CD4-positive, alpha-beta memory T cell (primary cell): ENCODE measurements at regions of chr4 and their contacts with region 1.

Region 1: DNA sequence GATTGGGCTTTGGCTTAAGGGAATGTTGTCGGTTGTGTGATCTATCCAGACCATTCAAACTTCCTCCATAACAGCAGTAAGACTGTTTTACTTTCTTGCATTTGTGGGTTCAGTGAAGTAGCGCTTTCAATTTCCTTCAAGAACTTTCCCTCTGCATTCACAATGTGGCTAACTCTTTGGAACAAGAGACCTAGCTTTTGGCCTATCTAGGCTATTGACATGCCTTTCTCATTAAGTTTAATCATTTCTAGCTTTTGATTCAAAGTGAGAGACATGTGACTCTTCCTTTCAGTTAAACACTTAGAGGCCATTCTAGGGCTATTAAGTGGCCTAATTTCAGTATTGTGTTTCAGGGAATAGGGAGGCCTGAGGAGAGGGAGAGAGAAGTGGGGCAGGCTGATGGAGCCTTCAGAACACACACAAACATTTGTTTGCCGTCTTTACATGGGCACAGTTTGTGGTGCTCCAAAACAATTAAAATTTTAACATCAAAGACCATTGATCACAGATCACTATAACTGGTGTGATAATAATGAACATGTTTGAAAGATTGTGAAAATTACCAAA is 34.1 kb downstream of the ADH5 start:
- DNase-seq: no peak
- H3K4me3 ChIP-seq: no peak overlapping the region
- H3K4me3 Mint-ChIP-seq: no peak overlapping the region
- H3K27ac ChIP-seq: no peak overlapping the region
- H3K27ac Mint-ChIP-seq: peak overlapping the region in 5 of 7 donors; percentile 37 to 88 (median 86)
- H3K4me1 ChIP-seq: peaks cover 7% of the 10 kb centered on the region
- H3K4me1 Mint-ChIP-seq: peaks cover 15 to 33% (median 23%) of the 10 kb centered on the region in 4 donors
- H3K27me3 ChIP-seq: no peaks in the 10 kb centered on the region
- H3K27me3 Mint-ChIP-seq: no peaks in the 10 kb centered on the region

Region 2: GRCh38 chr4:98143001-98143899 is 911.3 kb before region 1 on chr4 and contains the start of gene STPG2:
- CTCF ChIA-PET with region 1: interaction called, 12 read pairs
- POLR2A ChIA-PET with region 1: interaction called, 3 read pairs
- intact Hi-C with region 1: no loop called
- DNase-seq: peak; percentile 91 to 92 (median 92)
- H3K4me3 ChIP-seq: peak within 1 kb of the TSS; percentile 67 to 69
- H3K4me3 Mint-ChIP-seq: peak within 1 kb of the TSS; percentile 88 to 96 (median 93)
- H3K27ac ChIP-seq: peak within 1 kb of the TSS; percentile 74
- H3K27ac Mint-ChIP-seq: peak within 1 kb of the TSS; percentile 97 to 98 (median 97)
- H3K4me1 ChIP-seq: peaks cover 23% of the 10 kb centered on the region
- H3K4me1 Mint-ChIP-seq: peaks cover 16 to 35% (median 23%) of the 10 kb centered on the region in 4 donors
- H3K27me3 ChIP-seq: no peaks in the 10 kb centered on the region
- H3K27me3 Mint-ChIP-seq: no peaks in the 10 kb centered on the region
- total RNA-seq, gene STPG2: 0.47 to 0.84 TPM

Region 3: GRCh38 chr4:98467627-98468072 is 586.9 kb before region 1 on chr4:
- CTCF ChIA-PET with region 1: interaction called, 24 read pairs
- POLR2A ChIA-PET with region 1: interaction called, 7 read pairs
- intact Hi-C with region 1: loop called (anchors 1 kb)
- DNase-seq: peak; percentile 65 to 71 (median 66)
- H3K4me3 ChIP-seq: peak overlapping the region in 1 of 2 donors; percentile 47
- H3K4me3 Mint-ChIP-seq: peak overlapping the region; percentile 64 to 86 (median 79)
- H3K27ac ChIP-seq: no peak overlapping the region
- H3K27ac Mint-ChIP-seq: peak overlapping the region in 4 of 7 donors; percentile 27 to 74 (median 43)
- H3K4me1 ChIP-seq: peaks cover 19% of the 10 kb centered on the region
- H3K4me1 Mint-ChIP-seq: peaks cover 15 to 32% (median 24%) of the 10 kb centered on the region in 4 donors
- H3K27me3 ChIP-seq: no peaks in the 10 kb centered on the region
- H3K27me3 Mint-ChIP-seq: no peaks in the 10 kb centered on the region

Region 4: GRCh38 chr4:98557194-98557892 is 497.2 kb before region 1 on chr4:
- CTCF ChIA-PET with region 1: no interaction called
- POLR2A ChIA-PET with region 1: no interaction called
- intact Hi-C with region 1: no loop called
- DNase-seq: no peak
- H3K4me3 ChIP-seq: no peak overlapping the region
- H3K4me3 Mint-ChIP-seq: no peak overlapping the region
- H3K27ac ChIP-seq: no peak overlapping the region
- H3K27ac Mint-ChIP-seq: peak overlapping the region in 3 of 7 donors; percentile 7 to 76 (median 17)
- H3K4me1 ChIP-seq: no peaks in the 10 kb centered on the region
- H3K4me1 Mint-ChIP-seq: peaks cover 12 to 20% (median 20%) of the 10 kb centered on the region in 4 donors
- H3K27me3 ChIP-seq: no peaks in the 10 kb centered on the region
- H3K27me3 Mint-ChIP-seq: no peaks in the 10 kb centered on the region

Region 5: DNA sequence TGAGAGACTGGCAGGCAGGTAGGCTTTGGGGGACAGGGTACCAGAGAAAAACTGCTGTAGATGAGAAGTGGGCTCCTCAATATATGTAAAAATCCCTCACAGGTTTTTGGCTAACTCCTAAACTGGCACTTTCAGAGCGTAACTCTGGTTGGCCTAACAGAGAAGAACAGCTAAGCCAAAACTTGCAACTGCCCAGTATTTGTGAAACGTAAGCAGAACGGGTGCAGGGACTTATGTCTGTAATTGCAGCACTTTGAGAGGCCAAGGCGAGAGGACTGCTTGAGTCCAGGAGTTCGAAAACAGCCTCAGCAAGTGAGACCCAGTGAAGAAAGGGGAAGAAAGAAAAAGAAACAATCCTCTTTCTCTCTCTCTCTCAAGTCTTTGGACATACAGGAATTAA is 150.5 kb before region 1 on chr4:
- CTCF ChIA-PET with region 1: no interaction called
- POLR2A ChIA-PET with region 1: no interaction called
- intact Hi-C with region 1: no loop called
- DNase-seq: no peak
- H3K4me3 ChIP-seq: no peak overlapping the region
- H3K4me3 Mint-ChIP-seq: no peak overlapping the region
- H3K27ac ChIP-seq: no peak overlapping the region
- H3K27ac Mint-ChIP-seq: peak overlapping the region in 2 of 7 donors; percentile 64
- H3K4me1 ChIP-seq: peaks cover 40% of the 10 kb centered on the region
- H3K4me1 Mint-ChIP-seq: peaks cover 43 to 76% (median 59%) of the 10 kb centered on the region in 4 donors
- H3K27me3 ChIP-seq: no peaks in the 10 kb centered on the region
- H3K27me3 Mint-ChIP-seq: no peaks in the 10 kb centered on the region

Region 6: GRCh38 chr4:98928505-98929340 is 125.8 kb before region 1 on chr4 and contains the start of gene EIF4E:
- CTCF ChIA-PET with region 1: interaction called, 5 read pairs
- POLR2A ChIA-PET with region 1: interaction called, 10 read pairs
- intact Hi-C with region 1: loop called (anchors 2 kb)
- DNase-seq: peak; percentile 97 to 99 (median 98)
- H3K4me3 ChIP-seq: peak within 1 kb of the TSS; percentile 66 to 97
- H3K4me3 Mint-ChIP-seq: peak within 1 kb of the TSS; percentile 92 to 100 (median 98)
- H3K27ac ChIP-seq: peak within 1 kb of the TSS; percentile 82
- H3K27ac Mint-ChIP-seq: peak within 1 kb of the TSS; percentile 94 to 99 (median 98)
- H3K4me1 ChIP-seq: peaks cover 33% of the 10 kb centered on the region
- H3K4me1 Mint-ChIP-seq: peaks cover 17 to 58% (median 30%) of the 10 kb centered on the region in 4 donors
- H3K27me3 ChIP-seq: no peaks in the 10 kb centered on the region
- H3K27me3 Mint-ChIP-seq: peaks cover 0 to 2% of the 10 kb centered on the region in 2 donors
- total RNA-seq, gene EIF4E: 58.2 to 62.5 TPM

Region 7: DNA sequence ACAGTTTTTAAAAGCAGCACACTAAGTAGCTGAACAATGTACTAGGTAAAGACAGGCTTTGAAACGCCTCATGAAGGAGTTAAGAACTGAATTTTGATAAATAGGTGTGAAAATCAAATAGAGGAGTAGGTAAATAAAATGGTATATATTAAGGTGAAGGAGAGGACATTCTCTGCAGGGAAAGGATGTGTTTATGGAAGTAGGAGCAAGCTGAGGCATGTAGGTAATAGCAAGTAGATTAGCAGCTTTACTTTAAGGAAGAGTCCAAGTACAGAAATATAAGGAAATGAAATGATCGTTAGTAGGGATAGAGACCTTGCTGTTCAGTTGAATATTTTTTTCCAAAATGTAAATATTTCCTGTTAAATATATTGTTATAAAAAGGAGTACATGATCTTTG is 46.5 kb before region 1 on chr4:
- CTCF ChIA-PET with region 1: interaction called, 16 read pairs
- POLR2A ChIA-PET with region 1: no interaction called
- intact Hi-C with region 1: no loop called
- DNase-seq: no peak
- H3K4me3 ChIP-seq: no peak overlapping the region
- H3K4me3 Mint-ChIP-seq: no peak overlapping the region
- H3K27ac ChIP-seq: no peak overlapping the region
- H3K27ac Mint-ChIP-seq: no peak overlapping the region
- H3K4me1 ChIP-seq: peaks cover under 1% of the 10 kb centered on the region
- H3K4me1 Mint-ChIP-seq: peaks cover 31 to 65% (median 50%) of the 10 kb centered on the region in 4 donors
- H3K27me3 ChIP-seq: no peaks in the 10 kb centered on the region
- H3K27me3 Mint-ChIP-seq: no peaks in the 10 kb centered on the region

Region 8: GRCh38 chr4:99043346-99043745 is 11.2 kb before region 1 on chr4:
- CTCF ChIA-PET with region 1: interaction called, 34 read pairs
- POLR2A ChIA-PET with region 1: interaction called, 11 read pairs
- intact Hi-C with region 1: loop called (anchors 2 kb)
- DNase-seq: peak in 4 of 5 donors; percentile 51 to 70 (median 62)
- H3K4me3 ChIP-seq: no peak overlapping the region
- H3K4me3 Mint-ChIP-seq: peak overlapping the region; percentile 7 to 73 (median 70)
- H3K27ac ChIP-seq: peak overlapping the region; percentile 42
- H3K27ac Mint-ChIP-seq: peak overlapping the region; percentile 69 to 94 (median 89)
- H3K4me1 ChIP-seq: peaks cover 21% of the 10 kb centered on the region
- H3K4me1 Mint-ChIP-seq: peaks cover 10 to 22% (median 18%) of the 10 kb centered on the region in 4 donors
- H3K27me3 ChIP-seq: no peaks in the 10 kb centered on the region
- H3K27me3 Mint-ChIP-seq: no peaks in the 10 kb centered on the region

Region 9: GRCh38 chr4:99088481-99089365 is 34.2 kb after region 1 on chr4 and contains the start of gene ADH5:
- CTCF ChIA-PET with region 1: interaction called, 10 read pairs
- POLR2A ChIA-PET with region 1: interaction called, 13 read pairs
- intact Hi-C with region 1: loop called (anchors 1 kb)
- DNase-seq: peak; percentile 83 to 90 (median 86)
- H3K4me3 ChIP-seq: peak within 1 kb of the TSS; percentile 73 to 99
- H3K4me3 Mint-ChIP-seq: peak within 1 kb of the TSS; percentile 92 to 99 (median 98)
- H3K27ac ChIP-seq: peak within 1 kb of the TSS; percentile 77
- H3K27ac Mint-ChIP-seq: peak within 1 kb of the TSS; percentile 89 to 99 (median 98)
- H3K4me1 ChIP-seq: peaks cover 39% of the 10 kb centered on the region
- H3K4me1 Mint-ChIP-seq: peaks cover 35 to 71% (median 54%) of the 10 kb centered on the region in 4 donors
- H3K27me3 ChIP-seq: no peaks in the 10 kb centered on the region
- H3K27me3 Mint-ChIP-seq: no peaks in the 10 kb centered on the region
- total RNA-seq, gene ADH5: 75.6 to 80.5 TPM